HEK293T (cell line): ENCODE measurements at regions of chr19 and their contacts with region 1.

Region 1: GRCh38 chr19:17859533-17860330 is at the start of gene RPL18A:
- DNase-seq: peak; percentile 95

Region 2: GRCh38 chr19:17834350-17835181 is 25.2 kb before region 1 on chr19:
- CTCF ChIA-PET with region 1: no interaction called
- POLR2A ChIA-PET with region 1: interaction called, 11 read pairs
- DNase-seq: no peak

Region 3: GRCh38 chr19:17841810-17842662 is 17.7 kb before region 1 on chr19:
- CTCF ChIA-PET with region 1: no interaction called
- POLR2A ChIA-PET with region 1: interaction called, 22 read pairs
- DNase-seq: peak; percentile 97

Region 4: DNA sequence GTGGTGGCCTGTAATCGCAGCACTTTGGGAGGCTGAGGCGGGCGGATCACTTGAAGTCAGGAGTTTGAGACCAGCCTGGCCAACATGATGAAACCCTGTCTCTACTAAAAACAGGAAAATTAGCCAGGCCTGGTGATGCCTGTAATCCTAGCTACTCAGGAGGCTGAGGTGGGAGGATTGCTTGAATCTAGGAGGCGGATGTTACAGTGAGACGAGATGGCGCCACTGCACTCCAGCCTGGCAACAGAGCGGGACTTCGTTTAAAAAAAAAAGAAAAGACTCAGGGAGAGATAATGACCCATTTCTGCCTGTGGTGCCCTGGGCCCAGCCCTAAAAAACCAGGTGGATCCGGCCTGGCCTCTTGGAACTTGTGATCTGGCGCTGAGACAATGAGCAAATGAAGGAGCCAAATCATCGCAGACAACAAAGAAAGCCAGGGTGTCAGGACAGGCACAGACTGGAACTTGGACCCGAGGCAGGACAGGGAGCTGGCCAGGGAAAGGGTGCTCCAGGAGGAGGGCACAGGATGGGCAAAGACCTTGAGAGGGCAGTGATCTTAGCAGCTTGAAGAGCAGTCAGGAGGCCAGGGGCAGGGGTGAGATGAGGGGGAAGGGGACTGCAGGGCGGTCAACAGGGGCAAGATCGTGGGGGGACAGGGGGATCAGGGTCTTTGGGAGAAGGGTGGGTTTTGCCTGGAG is 11.0 kb before region 1 on chr19:
- CTCF ChIA-PET with region 1: interaction called, 8 read pairs
- POLR2A ChIA-PET with region 1: interaction called, 22 read pairs
- DNase-seq: no peak

Region 5: GRCh38 chr19:17932485-17933338 is 73.0 kb after region 1 on chr19 and contains the start of gene CCDC124:
- CTCF ChIA-PET with region 1: interaction called, 5 read pairs
- POLR2A ChIA-PET with region 1: interaction called, 80 read pairs
- DNase-seq: peak; percentile 94

Region 6: DNA sequence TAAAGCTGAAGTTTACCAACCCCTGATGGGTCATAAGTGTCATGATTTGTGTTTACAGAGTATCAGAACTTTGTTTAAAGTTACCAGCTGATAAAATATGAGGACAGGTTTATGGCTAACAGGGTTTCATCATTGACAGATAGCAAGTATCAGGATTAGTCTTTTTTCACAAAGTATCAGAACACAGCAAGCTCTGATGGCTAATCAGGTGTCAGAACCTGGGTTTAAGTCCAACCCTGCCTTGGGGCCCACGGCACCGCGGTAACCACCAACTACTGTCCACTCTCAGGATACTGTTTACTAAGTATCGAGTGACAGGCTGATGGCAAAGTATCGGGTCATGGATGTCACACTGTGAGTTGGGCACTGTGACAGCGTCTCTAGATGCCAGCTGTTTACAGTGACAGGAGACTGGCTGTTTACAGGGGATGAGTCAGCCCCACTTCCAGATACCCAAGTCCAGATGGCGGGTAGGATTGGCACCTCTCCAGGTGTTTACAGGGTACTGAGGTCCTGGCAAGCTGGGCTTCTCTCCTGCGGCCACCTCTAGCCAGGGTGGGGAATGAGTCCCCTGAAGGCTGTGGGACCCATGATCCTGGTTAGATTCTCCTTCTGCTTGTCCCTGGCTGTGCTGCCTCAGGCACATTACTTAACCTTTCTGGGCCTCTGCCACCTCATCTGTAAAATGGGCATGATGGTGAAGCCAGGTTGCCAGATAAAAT is 170.0 kb after region 1 on chr19:
- CTCF ChIA-PET with region 1: no interaction called
- POLR2A ChIA-PET with region 1: no interaction called
- DNase-seq: no peak